Panc1 (cell line): ENCODE measurements at regions of chr17 and their contacts with region 1.

Region 1: GRCh38 chr17:56358651-56359050 is 205.4 kb downstream of the ANKFN1 start:
- DNase-seq: no peak
- ATAC-seq: no peak
- H3K4me3 ChIP-seq: no peak overlapping the region
- H3K27ac ChIP-seq: no peak overlapping the region
- H3K4me1 ChIP-seq: no peaks in the 10 kb centered on the region
- H3K27me3 ChIP-seq: no peaks in the 10 kb centered on the region
- CTCF ChIP-seq: no peak

Region 2: GRCh38 chr17:56395791-56396190 is 37.1 kb after region 1 on chr17:
- CTCF ChIA-PET with region 1: no interaction called
- POLR2A ChIA-PET with region 1: no interaction called
- in situ Hi-C with region 1: no loop called
- intact Hi-C with region 1: no loop called
- DNase-seq: no peak
- ATAC-seq: no peak
- H3K4me3 ChIP-seq: no peak overlapping the region
- H3K27ac ChIP-seq: no peak overlapping the region
- H3K4me1 ChIP-seq: no peaks in the 10 kb centered on the region
- H3K27me3 ChIP-seq: no peaks in the 10 kb centered on the region
- CTCF ChIP-seq: no peak

Region 3: GRCh38 chr17:56425483-56425882 is 66.8 kb after region 1 on chr17:
- CTCF ChIA-PET with region 1: no interaction called
- POLR2A ChIA-PET with region 1: interaction called, 10 read pairs
- in situ Hi-C with region 1: no loop called
- intact Hi-C with region 1: no loop called
- DNase-seq: no peak
- ATAC-seq: no peak
- H3K4me3 ChIP-seq: no peak overlapping the region
- H3K27ac ChIP-seq: no peak overlapping the region
- H3K4me1 ChIP-seq: no peaks in the 10 kb centered on the region
- H3K27me3 ChIP-seq: peaks cover 4% of the 10 kb centered on the region; the same call in 1 of the 2 replicates
- CTCF ChIP-seq: no peak